Left cardiac atrium (tissue), 4 donors: ENCODE measurements at regions of chr1 and their contacts with region 1.

Region 1: DNA sequence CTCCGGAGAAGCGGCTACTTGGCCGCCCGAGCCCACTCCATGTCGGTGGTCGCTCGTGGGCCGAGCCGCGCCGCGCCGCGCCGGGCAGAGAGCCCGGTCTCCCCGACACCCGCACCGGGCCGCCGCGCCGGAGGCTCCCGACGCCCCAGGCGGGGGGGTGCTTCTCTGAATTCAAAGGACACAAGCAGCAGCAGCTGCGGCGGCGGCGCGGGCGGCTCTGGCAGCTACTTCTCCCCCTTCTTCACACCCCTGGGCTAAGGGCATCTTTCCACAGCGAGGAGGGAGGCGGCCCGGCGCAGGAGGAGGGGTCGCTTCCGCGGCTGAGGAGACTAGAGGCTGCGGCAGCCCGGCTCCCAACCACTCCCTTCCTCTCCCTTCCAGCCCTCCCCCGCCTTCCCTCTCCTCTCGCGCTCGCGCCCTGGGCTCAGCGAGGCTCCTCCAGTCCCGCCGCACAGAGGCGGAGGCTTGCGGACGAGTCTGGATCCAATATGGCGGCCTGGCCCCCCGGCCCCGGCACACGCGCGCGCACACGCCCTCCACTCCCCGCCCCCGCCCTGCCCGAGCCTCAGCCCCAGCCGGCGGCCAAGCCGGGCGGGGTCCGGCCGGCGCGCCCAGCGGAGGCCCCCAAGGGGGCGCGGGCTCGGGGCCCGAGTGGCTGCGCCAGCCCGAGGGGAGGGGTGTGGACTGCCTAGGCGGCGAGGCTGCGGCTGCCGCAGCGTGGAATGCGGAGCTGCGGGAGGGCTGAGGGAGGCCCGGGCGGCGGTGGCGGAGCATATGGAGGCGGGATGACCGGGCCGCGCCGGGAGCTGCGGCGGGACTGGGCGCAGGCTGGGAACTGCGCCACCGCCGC is at the start of gene CDC42BPA:
- DNase-seq: peak; percentile 90
- ATAC-seq: peak; percentile 91 to 95
- total RNA-seq, gene CDC42BPA: 35.3 to 41.0 TPM

Region 2: GRCh38 chr1:227225715-227226346 is 92.4 kb before region 1 on chr1:
- intact Hi-C with region 1: loop called in 1 of 2 experiments (anchors 10 kb)
- DNase-seq: no peak
- ATAC-seq: peak in 1 of 2 donors; percentile 64

Region 3: GRCh38 chr1:227242811-227243682 is 75.2 kb before region 1 on chr1:
- intact Hi-C with region 1: loop called in 1 of 2 experiments (anchors 5 kb)
- DNase-seq: no peak
- ATAC-seq: no peak